ENCODE measurements at regions of chr3 and their contacts with region 1.

Region 1: DNA sequence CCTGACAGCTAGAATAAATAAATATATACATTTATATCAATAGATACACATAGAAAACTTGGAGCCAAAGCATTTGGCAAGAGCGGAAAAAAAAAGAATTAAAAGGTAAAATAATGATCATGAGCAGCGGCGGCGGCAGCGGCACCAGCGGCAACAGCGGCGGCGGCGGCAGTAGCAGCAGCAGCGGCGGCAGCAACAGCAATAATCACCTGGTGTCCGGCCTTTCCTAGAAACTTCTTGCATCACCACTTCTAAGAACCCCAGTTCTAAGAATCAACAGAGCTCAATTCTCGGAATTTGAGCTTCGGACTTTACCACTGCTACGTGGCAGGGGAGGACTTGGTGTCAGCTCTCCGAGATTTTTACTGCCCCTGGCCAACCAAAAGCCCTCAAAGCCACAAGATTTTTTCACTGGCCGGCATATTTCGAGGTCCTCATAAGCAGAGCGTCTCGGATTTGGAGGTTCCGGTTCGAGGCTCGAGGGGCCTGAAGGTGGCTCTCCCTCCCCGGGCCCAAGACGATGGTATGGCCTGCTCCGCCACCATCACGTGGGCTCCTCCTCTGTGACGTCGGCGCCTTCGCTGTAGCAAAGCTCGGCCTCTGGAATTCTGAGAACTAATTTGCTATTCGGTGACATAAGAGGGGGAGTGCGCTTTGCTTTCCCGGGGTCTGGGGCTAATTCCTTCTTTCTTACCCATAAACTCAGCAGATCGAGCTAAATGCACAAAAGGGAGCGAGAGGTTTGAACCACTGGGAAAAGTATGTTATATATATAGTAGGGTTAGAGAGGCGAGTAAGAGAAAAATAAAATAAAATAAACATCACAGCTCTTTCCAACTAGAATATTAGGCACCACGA is at the start of gene BCL6:
- DNase-seq: peak; percentile 95
- H3K4me3 ChIP-seq: peak within 1 kb of the TSS; percentile 50 to 88 (median 85)
- H3K27ac ChIP-seq: peak within 1 kb of the TSS; percentile 100
- H3K4me1 ChIP-seq: peaks cover 21% of the 10 kb centered on the region
- H3K27me3 ChIP-seq: no peaks in the 10 kb centered on the region
- CTCF ChIP-seq: no peak
- POLR2A ChIP-seq: peak; percentile 89
- total RNA-seq, gene BCL6: 9.6 and 12.1 TPM in 2 replicates

Region 2: DNA sequence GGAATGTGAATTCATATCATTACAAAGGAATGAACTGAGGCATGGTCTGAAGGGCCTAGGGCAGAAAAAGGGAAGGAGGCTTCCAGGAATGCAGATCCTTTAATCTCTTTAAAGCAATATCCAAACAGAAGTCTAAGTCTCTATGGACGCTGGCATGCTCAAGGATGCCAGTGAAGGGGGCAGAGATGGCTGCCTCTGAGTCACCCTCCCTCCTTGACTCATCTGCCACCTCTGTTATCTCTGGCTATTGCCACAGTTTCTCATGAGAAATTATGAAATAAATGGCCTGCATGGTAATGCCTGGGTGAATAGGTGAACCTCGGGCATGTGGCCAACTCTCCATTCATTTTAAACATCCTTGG is 96.1 kb after region 1 on chr3:
- CTCF ChIA-PET with region 1: no interaction called
- POLR2A ChIA-PET with region 1: no interaction called
- dilution Hi-C with region 1: no loop called
- intact Hi-C with region 1: no loop called
- DNase-seq: no peak
- H3K4me3 ChIP-seq: no peak overlapping the region
- H3K27ac ChIP-seq: no peak overlapping the region
- H3K4me1 ChIP-seq: no peaks in the 10 kb centered on the region
- H3K27me3 ChIP-seq: peaks cover 2 to 8% of the 10 kb centered on the region in 2 experiments
- CTCF ChIP-seq: no peak
- POLR2A ChIP-seq: no peak

Region 3: DNA sequence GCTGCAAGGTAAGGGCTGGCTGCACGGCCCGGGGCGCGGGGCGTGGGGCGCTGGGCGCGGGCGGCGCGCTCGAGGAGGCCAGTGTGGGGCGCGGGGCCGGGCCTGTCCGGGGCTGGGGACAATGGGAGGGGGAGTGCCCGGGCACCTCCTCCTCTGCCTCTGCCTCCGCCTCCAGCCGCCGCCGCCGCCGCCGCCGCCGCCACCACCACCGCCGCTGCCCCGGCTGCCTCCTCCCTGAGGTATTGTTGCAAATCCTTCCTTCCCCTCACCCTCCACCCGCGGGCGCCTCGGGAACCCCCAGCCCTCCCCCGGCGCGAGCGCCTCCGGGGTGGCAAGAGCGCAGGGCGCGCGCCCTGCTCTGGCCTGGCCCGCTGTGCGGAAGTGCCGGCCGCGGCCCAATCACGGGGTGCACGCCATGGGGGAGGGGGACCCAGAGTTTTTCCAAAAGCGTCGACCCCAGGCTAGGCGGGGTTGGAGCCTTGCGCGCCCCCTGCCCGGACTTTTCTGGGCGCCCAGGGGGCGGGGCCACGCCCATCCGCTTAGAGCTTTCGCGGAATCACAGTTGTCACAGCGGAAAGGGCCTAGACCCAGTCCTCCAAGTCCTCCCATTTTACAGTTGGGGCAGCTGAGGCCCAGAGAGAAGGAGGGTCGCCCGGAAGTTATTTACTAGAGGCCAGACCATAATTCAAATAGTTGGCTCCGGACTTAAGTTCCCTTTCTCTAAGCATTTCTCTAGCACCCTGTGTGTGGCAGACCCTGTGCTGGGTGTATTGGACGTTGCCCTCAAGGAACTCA is 408.8 kb after region 1 on chr3 and contains the start of gene LPP:
- CTCF ChIA-PET with region 1: interaction called, 7 read pairs
- POLR2A ChIA-PET with region 1: interaction called, 13 read pairs
- dilution Hi-C with region 1: no loop called
- intact Hi-C with region 1: loop called (anchors 1 kb)
- DNase-seq: peak; percentile 45
- H3K4me3 ChIP-seq: peak within 1 kb of the TSS; percentile 91 to 94 (median 92)
- H3K27ac ChIP-seq: peak within 1 kb of the TSS; percentile 91
- H3K4me1 ChIP-seq: peaks cover 20% of the 10 kb centered on the region
- H3K27me3 ChIP-seq: no peaks in the 10 kb centered on the region
- CTCF ChIP-seq: no peak
- POLR2A ChIP-seq: peak; percentile 15
- total RNA-seq, gene LPP: 136 and 153 TPM in 2 replicates

Region 4: DNA sequence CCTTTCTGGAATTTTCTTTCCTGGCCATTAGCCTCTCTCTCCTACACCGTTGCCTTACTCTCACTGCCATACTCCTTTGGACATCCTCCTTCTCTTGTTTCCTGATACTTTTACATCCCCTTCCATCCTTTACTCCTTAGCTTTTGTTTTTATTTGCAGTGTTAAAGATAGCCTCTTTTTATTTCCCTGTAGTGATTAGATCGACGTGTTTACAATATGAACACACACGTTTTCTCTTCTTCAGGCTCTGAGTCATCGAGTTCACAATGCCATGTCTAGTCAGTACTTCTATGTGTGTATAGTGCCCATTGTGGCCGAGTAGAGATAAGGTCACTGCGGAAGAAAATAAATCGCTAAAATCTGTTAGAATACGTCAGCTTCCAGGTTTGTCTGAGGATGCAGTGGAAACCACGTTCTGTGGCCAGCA is 617.0 kb after region 1 on chr3:
- CTCF ChIA-PET with region 1: interaction called, 5 read pairs
- POLR2A ChIA-PET with region 1: no interaction called
- dilution Hi-C with region 1: no loop called
- intact Hi-C with region 1: loop called (anchors 2 kb)
- DNase-seq: peak; percentile 84
- H3K4me3 ChIP-seq: no peak overlapping the region
- H3K27ac ChIP-seq: peak overlapping the region; percentile 66
- H3K4me1 ChIP-seq: peaks cover 36% of the 10 kb centered on the region
- H3K27me3 ChIP-seq: no peaks in the 10 kb centered on the region
- CTCF ChIP-seq: no peak
- POLR2A ChIP-seq: no peak

Region 5: GRCh38 chr3:188584162-188584529 is 838.7 kb after region 1 on chr3:
- CTCF ChIA-PET with region 1: interaction called, 11 read pairs
- POLR2A ChIA-PET with region 1: no interaction called
- dilution Hi-C with region 1: no loop called
- intact Hi-C with region 1: loop called (anchors 2 kb)
- DNase-seq: peak; percentile 78
- H3K4me3 ChIP-seq: peak overlapping the region in 2 of 3 experiments; percentile 15 to 41
- H3K27ac ChIP-seq: peak overlapping the region; percentile 79
- H3K4me1 ChIP-seq: peaks cover 20% of the 10 kb centered on the region
- H3K27me3 ChIP-seq: no peaks in the 10 kb centered on the region
- CTCF ChIP-seq: no peak
- POLR2A ChIP-seq: no peak

Region 6: GRCh38 chr3:188749010-188749617 is 1003.7 kb after region 1 on chr3:
- CTCF ChIA-PET with region 1: interaction called, 16 read pairs
- POLR2A ChIA-PET with region 1: no interaction called
- dilution Hi-C with region 1: no loop called
- intact Hi-C with region 1: loop called (anchors 1 kb)
- DNase-seq: peak; percentile 9
- H3K4me3 ChIP-seq: no peak overlapping the region
- H3K27ac ChIP-seq: no peak overlapping the region
- H3K4me1 ChIP-seq: no peaks in the 10 kb centered on the region
- H3K27me3 ChIP-seq: no peaks in the 10 kb centered on the region
- CTCF ChIP-seq: peak; percentile 53 to 56
- POLR2A ChIP-seq: no peak

Region 7: GRCh38 chr3:188900421-188900951 is 1155.1 kb after region 1 on chr3:
- CTCF ChIA-PET with region 1: interaction called, 13 read pairs
- POLR2A ChIA-PET with region 1: no interaction called
- dilution Hi-C with region 1: no loop called
- intact Hi-C with region 1: loop called (anchors 1 kb)
- DNase-seq: peak; percentile 94
- H3K4me3 ChIP-seq: peak overlapping the region in 1 of 3 experiments; percentile 35
- H3K27ac ChIP-seq: peak overlapping the region; percentile 100
- H3K4me1 ChIP-seq: peaks cover 37% of the 10 kb centered on the region
- H3K27me3 ChIP-seq: no peaks in the 10 kb centered on the region
- CTCF ChIP-seq: no peak
- POLR2A ChIP-seq: no peak